HEK293T (cell line): ENCODE measurements at regions of chr6 and their contacts with region 1.

Region 1: DNA sequence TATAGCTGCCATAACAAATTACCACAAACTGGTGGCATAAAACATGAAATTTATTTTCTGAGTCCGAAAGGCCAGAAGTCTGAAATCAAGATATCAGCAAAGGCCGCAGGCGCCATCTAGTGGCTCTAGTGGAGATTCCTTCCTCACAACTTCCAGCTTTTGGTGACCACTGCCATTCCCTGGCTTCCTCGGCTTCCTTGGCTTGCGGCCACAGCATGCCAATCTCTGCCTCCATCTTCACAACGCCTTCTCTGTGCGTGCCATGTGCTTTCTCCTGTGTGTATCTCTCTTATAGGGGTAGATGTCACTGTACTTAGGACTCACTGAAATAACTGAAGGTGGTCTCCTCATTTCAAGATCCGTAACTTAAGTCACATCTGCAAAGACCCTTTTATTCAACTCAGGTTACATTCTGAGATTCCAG is 5.4 kb upstream of the PLAGL1 start:
- DNase-seq: peak; percentile 82

Region 2: GRCh38 chr6:143940011-143940597 is 73.4 kb before region 1 on chr6:
- CTCF ChIA-PET with region 1: interaction called, 37 read pairs
- POLR2A ChIA-PET with region 1: interaction called, 4 read pairs
- DNase-seq: peak; percentile 78